Adrenal gland (tissue), 19 donors: ENCODE measurements at regions of chr10 and their contacts with region 1.

Region 1: GRCh38 chr10:88553116-88553752 is 29.9 kb downstream of the RNLS start:
- DNase-seq: peak; percentile 49 to 91 (median 65)
- H3K4me3 ChIP-seq: no peak overlapping the region
- H3K27ac ChIP-seq: no peak overlapping the region
- H3K4me1 ChIP-seq: peaks cover 0 to 13% of the 10 kb centered on the region in 2 donors
- H3K27me3 ChIP-seq: no peaks in the 10 kb centered on the region
- CTCF ChIP-seq: peak; percentile 57 to 88 (median 79)
- POLR2A ChIP-seq: no peak

Region 2: DNA sequence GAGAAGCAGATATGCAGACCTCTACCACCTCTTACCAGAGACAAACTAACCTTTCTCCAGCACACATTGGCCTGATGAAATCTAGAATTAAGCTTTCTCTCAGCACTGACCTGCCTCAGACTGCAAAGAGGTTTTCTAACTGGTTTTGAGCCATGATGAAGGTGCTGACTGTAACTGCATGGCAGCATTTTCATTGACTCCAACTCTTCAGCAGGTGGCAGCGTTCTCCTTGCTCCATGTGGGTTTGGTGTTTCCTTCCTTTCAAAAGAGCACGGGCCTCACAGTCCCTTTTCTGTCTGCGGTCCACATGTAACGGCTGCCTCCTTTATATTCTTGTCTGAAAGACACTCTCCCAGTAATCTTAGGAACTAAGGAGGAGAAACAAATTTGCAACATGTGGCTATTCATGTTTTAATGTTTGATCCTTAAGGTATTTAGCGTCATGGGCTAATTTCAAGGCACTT is 702.5 kb before region 1 on chr10:
- intact Hi-C with region 1: loop called in 1 of 2 experiments (anchors 5 kb)
- DNase-seq: peak; percentile 55 to 87 (median 76)
- H3K4me3 ChIP-seq: no peak overlapping the region
- H3K27ac ChIP-seq: no peak overlapping the region
- H3K4me1 ChIP-seq: no peaks in the 10 kb centered on the region
- H3K27me3 ChIP-seq: no peaks in the 10 kb centered on the region
- CTCF ChIP-seq: peak; percentile 44 to 76 (median 70)
- POLR2A ChIP-seq: no peak

Region 3: GRCh38 chr10:88401671-88402347 is 151.4 kb before region 1 on chr10:
- intact Hi-C with region 1: loop called in 1 of 2 experiments (anchors 5 kb)
- DNase-seq: no peak
- H3K4me3 ChIP-seq: no peak overlapping the region
- H3K27ac ChIP-seq: no peak overlapping the region
- H3K4me1 ChIP-seq: no peaks in the 10 kb centered on the region
- H3K27me3 ChIP-seq: no peaks in the 10 kb centered on the region
- CTCF ChIP-seq: peak in 3 of 6 experiments; percentile 12 to 37 (median 25)
- POLR2A ChIP-seq: no peak